CD14-positive monocyte (primary cell): ENCODE measurements at regions of chr1 and their contacts with region 1.

Region 1: GRCh38 chr1:235938709-235939479 is 72.2 kb upstream of the LYST start:
- DNase-seq: peak; percentile 80 to 95 (median 93)
- H3K4me3 ChIP-seq: peak overlapping the region in 2 of 3 experiments; percentile 9 to 47
- H3K4me3 Mint-ChIP-seq: peak overlapping the region; percentile 58 to 77
- H3K27ac ChIP-seq: peak overlapping the region; percentile 95 to 100
- H3K27ac Mint-ChIP-seq: peak overlapping the region; percentile 97 to 100 (median 99)
- H3K4me1 ChIP-seq: peaks cover 97 to 100% of the 10 kb centered on the region in 2 donors
- H3K4me1 Mint-ChIP-seq: peaks cover 90% of the 10 kb centered on the region
- H3K27me3 ChIP-seq: no peaks in the 10 kb centered on the region
- H3K27me3 Mint-ChIP-seq: peaks cover 0 to 4% (median 0%) of the 10 kb centered on the region in 3 donors
- CTCF ChIP-seq: no peak

Region 2: GRCh38 chr1:235883261-235883927 is 55.5 kb before region 1 on chr1:
- intact Hi-C with region 1: no loop called
- DNase-seq: peak; percentile 72 to 87 (median 76)
- H3K4me3 ChIP-seq: no peak overlapping the region
- H3K4me3 Mint-ChIP-seq: no peak overlapping the region
- H3K27ac ChIP-seq: peak overlapping the region in 1 of 2 donors; percentile 23
- H3K27ac Mint-ChIP-seq: peak overlapping the region in 6 of 7 donors; percentile 51 to 83 (median 60)
- H3K4me1 ChIP-seq: peaks cover 55 to 63% of the 10 kb centered on the region in 2 donors
- H3K4me1 Mint-ChIP-seq: peaks cover 65% of the 10 kb centered on the region
- H3K27me3 ChIP-seq: no peaks in the 10 kb centered on the region
- H3K27me3 Mint-ChIP-seq: no peaks in the 10 kb centered on the region
- CTCF ChIP-seq: no peak

Region 3: DNA sequence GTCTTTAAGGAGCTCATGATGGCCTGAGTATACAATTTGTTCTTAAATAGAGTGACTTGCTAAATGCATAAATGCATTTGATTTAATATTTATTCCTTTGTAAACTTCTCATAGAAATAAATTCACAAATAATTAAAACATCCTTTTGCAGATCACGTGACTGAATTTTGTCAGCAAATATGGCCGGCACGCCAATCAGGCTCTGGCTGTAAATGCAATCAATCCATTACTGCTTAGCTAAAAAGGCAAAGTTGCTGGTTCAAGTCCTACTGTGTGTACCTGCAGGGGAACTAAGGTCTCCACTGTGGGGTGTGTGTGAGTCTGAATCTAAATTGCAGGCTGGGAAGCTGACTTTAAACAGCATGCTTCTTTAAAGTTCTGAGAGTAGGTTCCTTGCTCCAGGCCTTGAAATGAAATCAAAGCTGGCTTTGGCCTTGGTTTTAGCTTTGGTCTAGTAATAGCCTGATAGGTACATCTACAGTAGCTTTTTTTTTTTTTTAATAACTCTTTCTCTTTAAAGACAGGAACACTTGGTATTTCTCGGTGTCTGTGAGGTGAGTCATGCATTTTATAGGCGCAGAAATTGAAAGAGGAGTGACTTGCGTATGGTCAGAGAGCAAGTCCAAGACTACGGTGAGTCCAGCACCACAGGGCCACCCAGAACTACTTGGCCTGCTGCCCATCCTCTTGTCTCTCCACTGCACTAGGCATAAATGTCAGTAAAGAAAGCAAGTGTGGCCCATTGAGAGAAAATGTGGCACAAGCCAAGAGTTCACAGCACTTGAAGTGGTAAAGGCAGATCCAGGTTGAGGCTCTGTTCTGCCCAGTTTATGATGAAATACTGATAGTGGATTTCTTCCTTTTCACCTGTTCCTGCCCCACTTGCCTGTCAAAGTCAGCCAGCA is 36.0 kb before region 1 on chr1:
- intact Hi-C with region 1: loop called in 1 of 2 experiments (anchors 5 kb)
- DNase-seq: peak in 1 of 3 donors; percentile 62
- H3K4me3 ChIP-seq: no peak overlapping the region
- H3K4me3 Mint-ChIP-seq: no peak overlapping the region
- H3K27ac ChIP-seq: peak overlapping the region in 1 of 2 donors; percentile 20
- H3K27ac Mint-ChIP-seq: peak overlapping the region in 5 of 7 donors; percentile 14 to 79 (median 50)
- H3K4me1 ChIP-seq: peaks cover 46 to 56% of the 10 kb centered on the region in 2 donors
- H3K4me1 Mint-ChIP-seq: peaks cover 48% of the 10 kb centered on the region
- H3K27me3 ChIP-seq: no peaks in the 10 kb centered on the region
- H3K27me3 Mint-ChIP-seq: peaks cover 0 to 2% (median 0%) of the 10 kb centered on the region in 3 donors
- CTCF ChIP-seq: no peak

Region 4: DNA sequence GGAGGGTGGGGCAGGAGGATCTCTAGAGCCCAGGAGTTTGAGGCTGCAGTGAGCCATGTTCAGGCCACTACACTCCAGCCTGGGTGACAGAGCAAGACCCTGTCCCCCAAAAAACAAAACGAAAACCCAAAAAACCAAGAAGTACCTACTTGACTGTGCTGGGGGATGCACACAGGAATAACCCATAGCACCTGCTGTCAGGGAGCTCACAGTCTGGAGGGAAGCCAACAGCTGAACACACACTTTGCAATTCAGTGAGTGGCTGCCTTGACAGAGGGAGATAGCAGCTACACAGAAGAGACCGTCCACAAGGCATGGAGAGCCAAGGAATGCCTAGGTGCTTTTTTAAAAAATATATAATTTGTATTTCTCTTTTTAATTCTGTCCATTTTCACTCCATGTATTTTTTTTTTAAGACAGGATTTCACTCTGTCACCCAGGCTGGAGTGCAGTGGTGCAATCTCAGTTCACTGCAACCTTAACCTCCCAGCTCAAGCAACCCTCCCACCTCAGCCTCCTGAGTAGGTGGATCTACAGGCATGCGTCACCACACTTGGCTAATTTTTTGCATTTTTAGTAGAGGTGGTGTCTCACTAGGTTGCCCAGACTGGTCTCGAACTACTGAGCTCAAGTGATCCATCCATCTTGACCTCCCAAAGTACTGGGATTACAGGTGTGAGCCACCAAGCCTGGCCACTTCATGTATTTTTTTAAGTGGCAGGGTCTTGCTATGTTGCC is 57.3 kb after region 1 on chr1:
- intact Hi-C with region 1: no loop called
- DNase-seq: no peak
- H3K4me3 ChIP-seq: no peak overlapping the region
- H3K4me3 Mint-ChIP-seq: no peak overlapping the region
- H3K27ac ChIP-seq: no peak overlapping the region
- H3K27ac Mint-ChIP-seq: peak overlapping the region in 2 of 7 donors; percentile 46 to 61
- H3K4me1 ChIP-seq: peaks cover 30 to 37% of the 10 kb centered on the region in 2 donors
- H3K4me1 Mint-ChIP-seq: peaks cover 39% of the 10 kb centered on the region
- H3K27me3 ChIP-seq: no peaks in the 10 kb centered on the region
- H3K27me3 Mint-ChIP-seq: peaks cover 0 to 1% (median 1%) of the 10 kb centered on the region in 3 donors
- CTCF ChIP-seq: no peak